CD8-positive, alpha-beta T cell (primary cell): ENCODE measurements at regions of chr10 and their contacts with region 1.

Region 1: GRCh38 chr10:58384999-58385783 is at the start of gene TFAM:
- DNase-seq: peak; percentile 94 to 99 (median 96)
- ATAC-seq: peak; percentile 88
- H3K4me3 ChIP-seq: peak within 1 kb of the TSS; percentile 72 to 92
- H3K4me3 Mint-ChIP-seq: peak within 1 kb of the TSS; percentile 95
- H3K27ac ChIP-seq: peak within 1 kb of the TSS; percentile 75 to 80
- H3K27ac Mint-ChIP-seq: peak within 1 kb of the TSS; percentile 94
- H3K4me1 ChIP-seq: peaks cover 34% of the 10 kb centered on the region
- H3K4me1 Mint-ChIP-seq: peaks cover 59% of the 10 kb centered on the region
- H3K27me3 ChIP-seq: no peaks in the 10 kb centered on the region
- H3K27me3 Mint-ChIP-seq: no peaks in the 10 kb centered on the region
- CTCF ChIP-seq: peak; percentile 36
- total RNA-seq, gene TFAM: 53.7 to 55.7 TPM

Region 2: GRCh38 chr10:58268870-58269605 is 116.2 kb before region 1 on chr10 and contains the start of gene CISD1:
- CTCF ChIA-PET with region 1: interaction called, 9 read pairs
- POLR2A ChIA-PET with region 1: interaction called, 13 read pairs
- intact Hi-C with region 1: loop called (anchors 1 kb)
- DNase-seq: peak; percentile 84 to 100 (median 92)
- ATAC-seq: peak; percentile 59
- H3K4me3 ChIP-seq: peak within 1 kb of the TSS; percentile 78 to 84
- H3K4me3 Mint-ChIP-seq: peak within 1 kb of the TSS; percentile 97
- H3K27ac ChIP-seq: peak within 1 kb of the TSS; percentile 86
- H3K27ac Mint-ChIP-seq: peak within 1 kb of the TSS; percentile 97
- H3K4me1 ChIP-seq: peaks cover 30% of the 10 kb centered on the region
- H3K4me1 Mint-ChIP-seq: peaks cover 52% of the 10 kb centered on the region
- H3K27me3 ChIP-seq: no peaks in the 10 kb centered on the region
- H3K27me3 Mint-ChIP-seq: no peaks in the 10 kb centered on the region
- CTCF ChIP-seq: no peak
- total RNA-seq, gene CISD1: 2.8 to 3.2 TPM

Region 3: GRCh38 chr10:58299580-58299979 is 85.6 kb before region 1 on chr10:
- CTCF ChIA-PET with region 1: interaction called, 60 read pairs
- POLR2A ChIA-PET with region 1: interaction called, 5 read pairs
- intact Hi-C with region 1: loop called (anchors 1 kb)
- DNase-seq: peak; percentile 17 to 78 (median 64)
- ATAC-seq: peak; percentile 79
- H3K4me3 ChIP-seq: no peak overlapping the region
- H3K4me3 Mint-ChIP-seq: no peak overlapping the region
- H3K27ac ChIP-seq: no peak overlapping the region
- H3K27ac Mint-ChIP-seq: no peak overlapping the region
- H3K4me1 ChIP-seq: no peaks in the 10 kb centered on the region
- H3K4me1 Mint-ChIP-seq: peaks cover 3% of the 10 kb centered on the region
- H3K27me3 ChIP-seq: no peaks in the 10 kb centered on the region
- H3K27me3 Mint-ChIP-seq: peaks cover 9% of the 10 kb centered on the region
- CTCF ChIP-seq: peak; percentile 95

Region 4: GRCh38 chr10:58358314-58358933 is 26.8 kb before region 1 on chr10:
- CTCF ChIA-PET with region 1: no interaction called
- POLR2A ChIA-PET with region 1: interaction called, 4 read pairs
- intact Hi-C with region 1: loop called in 1 of 2 experiments (anchors 2 kb)
- DNase-seq: no peak
- ATAC-seq: no peak
- H3K4me3 ChIP-seq: no peak overlapping the region
- H3K4me3 Mint-ChIP-seq: no peak overlapping the region
- H3K27ac ChIP-seq: no peak overlapping the region
- H3K27ac Mint-ChIP-seq: no peak overlapping the region
- H3K4me1 ChIP-seq: peaks cover 20% of the 10 kb centered on the region
- H3K4me1 Mint-ChIP-seq: peaks cover 35% of the 10 kb centered on the region
- H3K27me3 ChIP-seq: no peaks in the 10 kb centered on the region
- H3K27me3 Mint-ChIP-seq: no peaks in the 10 kb centered on the region
- CTCF ChIP-seq: no peak

Region 5: GRCh38 chr10:58457761-58458616 is 72.8 kb after region 1 on chr10:
- CTCF ChIA-PET with region 1: no interaction called
- POLR2A ChIA-PET with region 1: no interaction called
- intact Hi-C with region 1: no loop called
- DNase-seq: no peak
- ATAC-seq: no peak
- H3K4me3 ChIP-seq: no peak overlapping the region
- H3K4me3 Mint-ChIP-seq: no peak overlapping the region
- H3K27ac ChIP-seq: no peak overlapping the region
- H3K27ac Mint-ChIP-seq: no peak overlapping the region
- H3K4me1 ChIP-seq: no peaks in the 10 kb centered on the region
- H3K4me1 Mint-ChIP-seq: no peaks in the 10 kb centered on the region
- H3K27me3 ChIP-seq: no peaks in the 10 kb centered on the region
- H3K27me3 Mint-ChIP-seq: peaks cover 8% of the 10 kb centered on the region
- CTCF ChIP-seq: no peak

Region 6: DNA sequence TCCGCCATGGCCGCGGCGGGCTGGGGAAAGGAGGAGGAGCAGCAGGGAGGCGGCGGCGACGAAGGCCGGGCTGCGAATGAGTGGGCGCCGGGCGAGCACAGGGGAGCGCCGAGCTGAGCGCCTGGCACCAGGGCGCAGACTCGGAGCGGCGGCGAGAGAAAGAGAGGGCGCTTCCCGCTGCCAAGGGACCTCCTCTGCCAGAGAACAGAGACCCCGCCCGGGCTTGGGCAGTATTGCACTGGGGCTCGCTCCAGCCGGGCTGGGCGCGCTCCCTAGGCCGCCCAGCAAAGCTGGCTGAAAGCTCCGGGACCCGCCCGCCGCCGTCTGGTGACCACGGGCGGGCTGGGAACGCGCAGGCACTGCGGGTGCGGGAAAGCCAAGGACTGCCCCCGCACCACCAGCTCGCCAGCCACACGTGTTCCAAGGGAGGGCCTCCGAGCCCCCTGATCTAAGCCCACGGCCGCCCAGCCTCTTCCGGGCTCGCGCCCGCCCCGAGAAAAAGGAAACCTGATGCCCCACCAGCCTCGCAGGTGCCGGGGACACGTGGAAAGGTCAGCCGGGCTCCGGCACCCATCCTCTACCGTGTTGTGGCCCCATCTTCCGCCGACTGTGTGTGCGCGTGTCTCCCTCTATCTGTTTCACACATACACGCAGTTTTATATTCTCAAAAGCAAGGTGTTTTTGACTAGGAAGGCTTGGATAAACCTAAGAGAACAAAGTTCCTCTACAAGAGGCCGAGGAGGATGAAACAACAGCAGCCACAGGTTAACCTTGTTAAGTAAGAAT is 1521.4 kb after region 1 on chr10 and contains the start of gene CCDC6:
- CTCF ChIA-PET with region 1: no interaction called
- POLR2A ChIA-PET with region 1: no interaction called
- intact Hi-C with region 1: loop called (anchors 2 kb)
- DNase-seq: peak; percentile 87 to 96 (median 94)
- ATAC-seq: peak; percentile 89
- H3K4me3 ChIP-seq: peak within 1 kb of the TSS; percentile 80 to 84
- H3K4me3 Mint-ChIP-seq: peak within 1 kb of the TSS; percentile 95
- H3K27ac ChIP-seq: peak within 1 kb of the TSS; percentile 77 to 80
- H3K27ac Mint-ChIP-seq: peak within 1 kb of the TSS; percentile 97
- H3K4me1 ChIP-seq: peaks cover 41% of the 10 kb centered on the region
- H3K4me1 Mint-ChIP-seq: peaks cover 62% of the 10 kb centered on the region
- H3K27me3 ChIP-seq: no peaks in the 10 kb centered on the region
- H3K27me3 Mint-ChIP-seq: no peaks in the 10 kb centered on the region
- CTCF ChIP-seq: peak; percentile 80
- total RNA-seq, gene CCDC6: 21.6 to 23.7 TPM